ENCODE measurements at regions of chr16 and their contacts with region 1.

Region 1: DNA sequence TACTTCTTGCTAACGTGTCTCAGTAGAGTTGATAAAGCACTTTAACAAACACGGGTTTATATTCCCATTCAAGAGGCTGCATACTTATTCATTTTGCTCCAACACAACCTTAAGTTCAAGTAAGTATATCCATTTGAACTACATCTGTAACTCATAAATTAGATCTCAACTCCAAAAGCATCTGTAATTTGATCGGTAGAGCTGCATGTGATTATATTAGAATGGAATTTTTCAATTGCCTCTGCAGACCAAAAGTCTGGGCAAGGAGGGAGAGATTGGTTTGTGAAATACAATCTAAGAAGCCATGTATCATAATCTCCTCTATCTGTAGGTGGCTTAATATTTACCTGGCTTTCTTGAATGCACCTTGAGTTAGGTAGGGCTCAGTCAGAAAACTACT is 371.0 kb downstream of the RBFOX1 start:
- DNase-seq: no peak
- ATAC-seq: no peak
- H3K4me3 ChIP-seq: no peak overlapping the region
- H3K27ac ChIP-seq: no peak overlapping the region
- H3K4me1 ChIP-seq: no peaks in the 10 kb centered on the region
- H3K27me3 ChIP-seq: no peaks in the 10 kb centered on the region
- CTCF ChIP-seq: no peak
- POLR2A ChIP-seq: no peak

Region 2: DNA sequence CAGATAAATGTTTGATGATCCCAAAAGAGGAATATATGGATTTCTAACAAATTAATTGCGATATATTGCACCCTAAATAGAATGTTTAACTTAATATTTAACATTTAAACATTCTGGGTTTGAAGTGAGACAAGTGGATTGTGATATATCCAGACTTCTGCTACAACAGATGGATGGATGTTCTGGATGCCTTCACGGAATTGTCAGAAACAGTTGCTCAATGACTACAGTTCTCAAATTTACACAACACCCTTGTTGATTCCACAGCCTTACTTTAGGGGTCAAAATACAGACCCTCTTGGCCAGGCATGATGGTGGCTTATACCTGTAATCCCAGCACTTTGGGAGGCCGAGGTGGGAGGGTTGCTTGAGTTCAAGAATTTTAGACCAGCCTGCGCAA is 120.3 kb before region 1 on chr16:
- intact Hi-C with region 1: no loop called
- DNase-seq: no peak
- ATAC-seq: no peak
- H3K4me3 ChIP-seq: no peak overlapping the region
- H3K27ac ChIP-seq: no peak overlapping the region
- H3K4me1 ChIP-seq: no peaks in the 10 kb centered on the region
- H3K27me3 ChIP-seq: no peaks in the 10 kb centered on the region
- CTCF ChIP-seq: no peak
- POLR2A ChIP-seq: no peak

Region 3: GRCh38 chr16:7736138-7736665 is 32.5 kb after region 1 on chr16:
- intact Hi-C with region 1: loop called in 1 of 10 experiments (anchors 5 kb)
- DNase-seq: no peak
- ATAC-seq: no peak
- H3K4me3 ChIP-seq: no peak overlapping the region
- H3K27ac ChIP-seq: no peak overlapping the region
- H3K4me1 ChIP-seq: no peaks in the 10 kb centered on the region
- H3K27me3 ChIP-seq: no peaks in the 10 kb centered on the region
- CTCF ChIP-seq: no peak
- POLR2A ChIP-seq: no peak